ENCODE measurements at regions of chr10 and their contacts with region 1.

Region 1: GRCh38 chr10:116796910-116797513 is 52.3 kb upstream of the ENO4 start:
- DNase-seq: peak; percentile 70 to 84 (median 80)
- H3K4me3 ChIP-seq: no peak overlapping the region
- H3K27ac ChIP-seq: no peak overlapping the region
- H3K27me3 ChIP-seq: peaks cover 0 to 4% (median 0%) of the 10 kb centered on the region in 45 donors
- CTCF ChIP-seq: peak; percentile 89 to 100 (median 97)

Region 2: GRCh38 chr10:116627386-116627933 is 169.6 kb before region 1 on chr10:
- intact Hi-C with region 1: loop called in 1 of 2 experiments (anchors 5 kb)
- DNase-seq: peak in 2 of 10 donors; percentile 14 to 55
- H3K4me3 ChIP-seq: peak overlapping the region in 52 of 59 donors; percentile 16 to 62 (median 38)
- H3K27ac ChIP-seq: no peak overlapping the region
- H3K27me3 ChIP-seq: peaks cover 0 to 50% (median 19%) of the 10 kb centered on the region in 45 donors
- CTCF ChIP-seq: peak in 45 of 56 donors; percentile 9 to 64 (median 40)

Region 3: GRCh38 chr10:116721547-116722392 is 75.2 kb before region 1 on chr10:
- intact Hi-C with region 1: no loop called
- DNase-seq: no peak
- H3K4me3 ChIP-seq: no peak overlapping the region
- H3K27ac ChIP-seq: peak overlapping the region in 2 of 59 donors; percentile 0 to 21
- H3K27me3 ChIP-seq: no peaks in the 10 kb centered on the region
- CTCF ChIP-seq: no peak

Region 4: DNA sequence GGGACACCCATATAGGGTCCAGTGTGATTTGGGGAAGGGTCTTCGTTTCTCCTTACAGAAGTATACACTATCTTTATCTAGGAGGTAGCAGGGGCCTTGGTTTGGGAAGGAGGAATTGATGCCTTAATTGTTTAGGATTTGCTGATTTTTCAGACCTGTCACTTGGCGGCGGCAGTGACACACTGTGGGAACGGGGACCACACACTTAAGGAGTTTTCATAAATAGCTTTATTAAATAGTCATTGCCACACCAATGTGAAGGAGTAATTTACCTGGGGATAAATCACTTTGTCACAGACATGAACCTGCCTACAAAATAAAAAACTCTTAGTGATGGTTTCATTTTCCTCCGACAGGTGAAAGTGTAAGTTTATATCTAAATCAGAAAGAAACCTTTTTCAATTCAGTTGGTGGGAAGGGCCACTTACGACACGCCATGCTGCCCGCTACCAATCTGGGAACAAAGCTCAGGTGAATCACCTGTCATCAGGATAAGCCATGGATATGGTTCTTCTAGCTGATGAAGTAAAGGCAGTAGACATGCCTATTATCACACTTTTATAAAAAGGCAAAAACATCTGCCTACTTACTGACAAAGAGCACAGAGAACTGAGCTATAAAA is 40.0 kb after region 1 on chr10:
- intact Hi-C with region 1: no loop called
- DNase-seq: no peak
- H3K4me3 ChIP-seq: no peak overlapping the region
- H3K27ac ChIP-seq: no peak overlapping the region
- H3K27me3 ChIP-seq: no peaks in the 10 kb centered on the region
- CTCF ChIP-seq: no peak

Region 5: DNA sequence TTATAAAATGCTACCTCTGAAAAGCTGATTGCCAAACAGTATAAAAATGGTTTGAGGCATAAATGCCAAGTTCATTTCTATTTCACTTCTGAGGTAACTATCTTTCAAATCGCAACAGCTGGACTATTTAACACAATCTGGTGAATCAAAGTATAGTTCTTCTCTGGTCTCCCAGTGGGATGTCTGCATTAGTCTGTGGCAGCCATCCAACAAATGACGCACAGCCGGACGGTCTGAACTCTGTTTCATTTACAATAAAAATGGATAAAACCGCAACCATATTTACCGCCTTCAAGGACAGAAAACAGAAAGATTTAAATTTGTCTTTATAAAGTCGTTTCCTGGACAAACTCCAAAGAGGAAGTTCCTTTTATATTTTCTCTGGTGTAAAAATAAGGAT is 94.2 kb after region 1 on chr10:
- intact Hi-C with region 1: no loop called
- DNase-seq: peak in 6 of 10 donors; percentile 42 to 66 (median 60)
- H3K4me3 ChIP-seq: peak overlapping the region in 7 of 59 donors; percentile 0 to 30 (median 8)
- H3K27ac ChIP-seq: peak overlapping the region in 30 of 59 donors; percentile 0 to 74 (median 38)
- H3K27me3 ChIP-seq: no peaks in the 10 kb centered on the region
- CTCF ChIP-seq: no peak